Heart right ventricle (tissue), 16 donors: ENCODE measurements at regions of chr1 and their contacts with region 1.

Region 1: DNA sequence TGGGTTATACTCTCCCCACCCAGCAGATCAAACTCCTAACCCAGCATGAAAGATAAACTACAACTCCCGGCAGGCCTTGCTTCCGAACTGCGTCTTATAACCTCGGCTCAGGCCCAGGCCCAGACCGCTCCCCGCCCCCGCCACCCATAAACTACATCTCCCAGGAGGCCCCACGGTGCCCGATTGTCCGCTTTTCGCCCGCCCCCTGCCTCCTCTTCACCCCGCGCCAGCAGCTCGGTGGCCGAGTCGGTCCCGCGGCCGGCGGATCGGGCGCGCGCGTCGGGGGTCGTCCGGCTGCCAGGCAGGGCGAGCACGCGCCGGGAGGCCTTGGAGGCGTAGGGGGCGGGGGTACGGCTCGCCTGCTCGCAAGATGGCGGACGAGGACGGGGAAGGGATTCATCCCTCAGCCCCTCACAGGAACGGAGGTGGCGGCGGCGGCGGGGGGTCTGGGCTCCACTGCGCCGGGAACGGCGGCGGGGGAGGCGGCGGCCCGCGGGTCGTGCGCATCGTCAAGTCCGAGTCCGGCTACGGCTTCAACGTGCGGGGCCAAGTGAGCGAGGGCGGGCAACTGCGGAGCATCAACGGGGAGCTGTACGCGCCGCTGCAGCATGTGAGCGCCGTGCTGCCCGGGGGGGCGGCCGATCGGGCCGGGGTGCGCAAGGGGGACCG is at the start of gene SNX27:
- DNase-seq: peak; percentile 89 to 95
- ATAC-seq: peak; percentile 95 to 97 (median 97)
- H3K4me3 ChIP-seq: peak within 1 kb of the TSS; percentile 74 to 99 (median 98)
- H3K27ac ChIP-seq: peak within 1 kb of the TSS; percentile 83 to 98 (median 94)
- H3K4me1 ChIP-seq: peaks cover 0 to 58% (median 18%) of the 10 kb centered on the region in 9 donors
- H3K27me3 ChIP-seq: peaks cover 0 to 4% (median 0%) of the 10 kb centered on the region in 7 donors
- CTCF ChIP-seq: no peak
- total RNA-seq, gene SNX27: 26.9 to 37.8 (median 33.4) TPM

Region 2: GRCh38 chr1:151693076-151693651 is 81.2 kb after region 1 on chr1:
- intact Hi-C with region 1: loop called in 1 of 10 experiments (anchors 5 kb)
- DNase-seq: no peak
- ATAC-seq: no peak
- H3K4me3 ChIP-seq: no peak overlapping the region
- H3K27ac ChIP-seq: no peak overlapping the region
- H3K4me1 ChIP-seq: peaks cover 0 to 13% (median 0%) of the 10 kb centered on the region in 9 donors
- H3K27me3 ChIP-seq: no peaks in the 10 kb centered on the region
- CTCF ChIP-seq: peak in 7 of 9 donors; percentile 44 to 61 (median 53)

Region 3: DNA sequence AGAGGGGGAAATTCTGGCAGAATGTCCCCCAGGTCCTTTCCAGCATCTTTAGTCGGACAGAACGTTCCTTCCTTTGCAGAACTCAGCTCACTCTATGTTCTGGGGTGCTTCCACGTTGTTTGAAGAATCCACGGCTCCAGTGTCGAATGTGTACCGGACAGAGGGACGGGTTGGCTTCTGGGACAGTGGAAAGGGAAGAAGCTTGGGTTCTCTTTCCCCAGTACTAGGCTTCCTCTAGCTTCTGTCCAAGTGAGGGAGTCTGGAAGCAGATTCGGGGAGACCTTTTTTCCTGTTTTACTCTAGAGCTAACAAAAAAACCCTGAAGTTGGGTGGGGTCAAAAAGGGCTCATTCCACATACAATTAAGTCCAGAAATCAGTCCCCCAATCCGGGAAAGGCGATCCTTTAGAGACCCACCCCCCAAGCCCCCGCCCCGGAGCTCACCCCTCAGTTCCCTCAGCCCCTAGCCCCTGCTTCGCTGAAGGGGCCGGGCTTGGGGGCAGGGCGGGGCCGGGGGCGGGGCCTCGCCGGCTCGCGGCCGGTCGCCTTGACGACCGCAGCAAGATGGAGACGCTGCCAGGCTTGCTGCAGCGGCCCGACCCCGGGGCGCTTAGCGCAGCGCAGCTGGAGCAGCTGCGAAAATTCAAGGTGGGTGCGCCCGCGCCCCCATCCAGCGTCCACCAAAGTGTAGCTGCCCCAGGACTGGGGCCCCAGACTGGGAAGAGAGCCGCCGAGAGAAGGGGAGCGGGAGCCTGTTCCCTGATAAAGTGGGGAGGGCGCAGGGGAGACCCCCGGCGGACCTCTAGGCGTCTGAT is 109.2 kb after region 1 on chr1 and contains the start of gene RIIAD1:
- intact Hi-C with region 1: loop called in 1 of 10 experiments (anchors 10 kb)
- DNase-seq: peak in 1 of 2 donors; percentile 51
- ATAC-seq: peak; percentile 76 to 91 (median 86)
- H3K4me3 ChIP-seq: peak within 1 kb of the TSS; percentile 41 to 71 (median 58)
- H3K27ac ChIP-seq: peak within 1 kb of the TSS; percentile 2 to 80 (median 75)
- H3K4me1 ChIP-seq: peaks cover 7 to 58% (median 40%) of the 10 kb centered on the region in 9 donors
- H3K27me3 ChIP-seq: peaks cover 0 to 75% (median 17%) of the 10 kb centered on the region in 7 donors
- CTCF ChIP-seq: peak in 3 of 9 donors; percentile 14 to 32 (median 28)
- total RNA-seq, gene RIIAD1: 3.4 to 11.4 (median 7.1) TPM

Region 4: DNA sequence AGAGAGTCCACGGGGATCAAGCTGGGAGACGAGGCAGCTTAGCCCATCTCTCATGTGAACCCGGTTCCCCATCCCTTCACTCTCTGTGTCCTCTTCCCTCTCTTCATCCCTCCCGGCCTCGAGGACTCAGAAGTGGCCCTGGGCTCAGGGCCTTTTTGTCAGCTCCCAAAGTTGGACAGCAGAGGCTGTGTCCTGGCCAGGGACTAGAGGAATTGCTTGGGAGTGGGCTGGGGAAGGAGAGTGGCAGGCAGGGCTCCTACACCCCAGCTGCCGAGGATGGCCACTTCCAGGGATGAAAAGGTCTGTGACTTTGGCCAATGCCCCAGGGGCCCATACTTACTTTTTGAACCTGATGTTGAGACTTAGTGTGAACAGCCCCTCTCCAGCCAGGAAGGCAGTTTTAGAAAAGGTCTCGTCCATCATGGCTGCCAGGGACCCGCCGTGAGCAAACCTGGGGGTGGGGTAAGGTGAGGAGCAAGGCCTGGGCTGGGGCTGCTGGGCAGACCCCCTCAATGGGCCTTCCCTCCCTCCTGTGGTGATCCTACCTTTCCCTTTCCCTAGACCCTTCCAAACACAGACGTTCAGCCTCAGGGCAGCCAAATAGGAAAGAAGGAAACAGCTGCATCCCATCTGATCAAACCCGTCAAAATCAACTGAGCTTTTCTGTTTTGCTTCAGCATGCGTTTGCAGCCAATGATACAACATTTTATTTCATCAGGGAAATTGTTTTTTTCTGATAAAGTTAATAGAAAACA is 236.1 kb after region 1 on chr1:
- intact Hi-C with region 1: no loop called
- DNase-seq: no peak
- ATAC-seq: peak in 4 of 8 donors; percentile 14 to 62 (median 36)
- H3K4me3 ChIP-seq: no peak overlapping the region
- H3K27ac ChIP-seq: peak overlapping the region in 2 of 10 donors; percentile 20 to 31
- H3K4me1 ChIP-seq: peaks cover 0 to 16% (median 4%) of the 10 kb centered on the region in 9 donors
- H3K27me3 ChIP-seq: peaks cover 0 to 41% (median 5%) of the 10 kb centered on the region in 7 donors
- CTCF ChIP-seq: no peak